Caco-2 (cell line): ENCODE measurements at regions of chr6 and their contacts with region 1.

Region 1: GRCh38 chr6:131063028-131063763 is at the start of gene EPB41L2:
- DNase-seq: peak; percentile 91 to 95
- H3K4me3 ChIP-seq: peak within 1 kb of the TSS; percentile 97
- H3K4me3 Mint-ChIP-seq: peak within 1 kb of the TSS; percentile 80
- H3K27ac Mint-ChIP-seq: peak within 1 kb of the TSS; percentile 70
- H3K4me1 ChIP-seq: peaks cover 31% of the 10 kb centered on the region
- H3K4me1 Mint-ChIP-seq: peaks cover 25% of the 10 kb centered on the region
- H3K27me3 ChIP-seq: no peaks in the 10 kb centered on the region
- H3K27me3 Mint-ChIP-seq: no peaks in the 10 kb centered on the region
- CTCF ChIP-seq: peak; percentile 19 to 20
- total RNA-seq, gene EPB41L2: 91.7 and 106 TPM in 2 replicates

Region 2: DNA sequence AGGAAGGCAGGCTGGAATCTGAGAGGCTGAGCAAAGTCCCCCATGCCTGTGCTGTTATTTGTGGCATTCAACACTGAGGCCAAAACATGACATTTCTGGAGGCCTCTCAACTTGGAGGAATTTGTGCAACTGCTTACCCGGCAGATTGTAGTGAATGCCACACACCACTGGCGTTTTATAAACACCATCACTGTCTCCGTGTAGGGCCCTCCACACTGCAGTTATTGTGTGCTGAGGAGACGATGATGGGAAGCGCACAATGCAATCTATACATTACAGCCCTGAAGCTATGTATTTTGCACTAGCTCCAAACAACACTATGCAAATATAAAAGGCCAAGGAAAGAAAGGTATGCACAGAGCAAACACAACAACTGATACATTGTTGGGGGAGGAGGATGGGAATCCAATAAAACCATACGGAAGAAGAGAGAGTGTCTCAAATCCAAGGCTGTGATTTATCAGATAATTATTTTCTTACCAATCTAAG is 129.4 kb before region 1 on chr6:
- CTCF ChIA-PET with region 1: no interaction called
- POLR2A ChIA-PET with region 1: no interaction called
- intact Hi-C with region 1: loop called (anchors 5 kb)
- DNase-seq: peak; percentile 48 to 67
- H3K4me3 ChIP-seq: peak overlapping the region; percentile 13
- H3K4me3 Mint-ChIP-seq: peak overlapping the region; percentile 72
- H3K27ac Mint-ChIP-seq: peak overlapping the region; percentile 63
- H3K4me1 ChIP-seq: peaks cover 57% of the 10 kb centered on the region
- H3K4me1 Mint-ChIP-seq: peaks cover 34% of the 10 kb centered on the region
- H3K27me3 ChIP-seq: no peaks in the 10 kb centered on the region
- H3K27me3 Mint-ChIP-seq: no peaks in the 10 kb centered on the region
- CTCF ChIP-seq: no peak

Region 3: DNA sequence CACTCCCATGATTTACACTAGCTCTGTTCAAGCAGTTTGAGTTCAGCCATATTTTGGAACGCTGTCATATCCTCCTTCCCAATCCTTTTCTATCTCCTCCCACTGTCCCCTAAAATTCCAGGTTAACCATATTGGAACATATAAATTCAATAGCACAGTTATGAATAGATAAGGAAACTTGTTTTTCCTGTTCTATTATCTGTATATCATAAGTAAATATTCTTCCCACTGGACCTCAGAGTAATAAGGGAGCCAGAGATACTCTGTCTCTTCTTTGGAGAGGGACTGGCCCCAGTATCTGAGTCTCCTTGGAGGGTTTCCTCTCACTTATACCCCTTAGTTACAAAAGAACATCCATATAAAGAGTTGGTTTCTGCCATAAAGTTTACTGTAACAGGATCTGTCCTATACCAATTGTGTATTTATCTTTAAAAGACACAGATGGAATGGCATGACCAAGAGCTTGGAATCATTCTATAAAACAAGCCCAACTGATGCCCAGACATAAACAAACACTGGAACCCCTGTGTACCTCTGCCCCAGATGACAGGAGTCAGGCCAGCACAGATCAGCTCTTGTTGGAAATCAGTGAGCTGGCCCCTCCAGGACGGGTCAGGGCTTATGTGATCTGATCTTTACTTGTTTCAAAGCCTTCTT is 67.3 kb before region 1 on chr6:
- CTCF ChIA-PET with region 1: no interaction called
- POLR2A ChIA-PET with region 1: no interaction called
- intact Hi-C with region 1: loop called (anchors 2 kb)
- DNase-seq: peak in 1 of 2 experiments; percentile 14
- H3K4me3 ChIP-seq: no peak overlapping the region
- H3K4me3 Mint-ChIP-seq: peak overlapping the region; percentile 2
- H3K27ac Mint-ChIP-seq: peak overlapping the region; percentile 12
- H3K4me1 ChIP-seq: peaks cover 55% of the 10 kb centered on the region
- H3K4me1 Mint-ChIP-seq: peaks cover 18% of the 10 kb centered on the region
- H3K27me3 ChIP-seq: no peaks in the 10 kb centered on the region
- H3K27me3 Mint-ChIP-seq: no peaks in the 10 kb centered on the region
- CTCF ChIP-seq: no peak

Region 4: DNA sequence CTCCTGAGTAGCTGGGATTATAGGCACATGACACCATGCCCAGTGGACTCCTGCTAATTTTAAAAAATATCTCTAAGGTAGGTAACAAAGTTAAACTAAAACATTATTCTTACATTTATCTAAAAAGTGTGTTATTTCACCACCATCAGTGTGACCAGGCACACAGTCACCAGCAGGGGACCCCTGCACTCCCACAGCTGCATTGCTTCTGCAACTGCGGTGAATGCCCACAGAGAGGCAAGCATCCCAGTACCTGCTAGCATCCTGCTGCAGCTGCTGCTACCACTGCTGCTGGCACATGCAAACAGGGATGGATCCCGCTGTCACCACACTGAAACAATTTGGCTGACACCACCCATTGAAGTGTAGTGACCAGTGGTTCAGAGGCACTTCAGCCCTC is 21.8 kb after region 1 on chr6:
- CTCF ChIA-PET with region 1: no interaction called
- POLR2A ChIA-PET with region 1: no interaction called
- intact Hi-C with region 1: no loop called
- DNase-seq: peak in 1 of 2 experiments; percentile 25
- H3K4me3 ChIP-seq: no peak overlapping the region
- H3K4me3 Mint-ChIP-seq: no peak overlapping the region
- H3K27ac Mint-ChIP-seq: no peak overlapping the region
- H3K4me1 ChIP-seq: peaks cover 8% of the 10 kb centered on the region; the same call in 1 of the 2 replicates
- H3K4me1 Mint-ChIP-seq: peaks cover 11% of the 10 kb centered on the region
- H3K27me3 ChIP-seq: no peaks in the 10 kb centered on the region
- H3K27me3 Mint-ChIP-seq: no peaks in the 10 kb centered on the region
- CTCF ChIP-seq: peak; percentile 34 to 41

Region 5: GRCh38 chr6:131107151-131107550 is 44.0 kb after region 1 on chr6:
- CTCF ChIA-PET with region 1: no interaction called
- POLR2A ChIA-PET with region 1: no interaction called
- intact Hi-C with region 1: loop called (anchors 1 kb)
- DNase-seq: peak in 1 of 2 experiments; percentile 51
- H3K4me3 ChIP-seq: no peak overlapping the region
- H3K4me3 Mint-ChIP-seq: no peak overlapping the region
- H3K27ac Mint-ChIP-seq: peak overlapping the region; percentile 67
- H3K4me1 ChIP-seq: peaks cover 47% of the 10 kb centered on the region
- H3K4me1 Mint-ChIP-seq: peaks cover 18% of the 10 kb centered on the region
- H3K27me3 ChIP-seq: no peaks in the 10 kb centered on the region
- H3K27me3 Mint-ChIP-seq: no peaks in the 10 kb centered on the region
- CTCF ChIP-seq: no peak